Activated CD8-positive, alpha-beta memory T cell treated with anti-CD3 and anti-CD28 coated beads, Interleukin-2, amount 10 ng/mL, durations not matched to agents 7 days and 5 days (primary cell): ENCODE measurements at regions of chr17 and their contacts with region 1.

Region 1: GRCh38 chr17:49370971-49371834 is 9.2 kb upstream of the ZNF652 start:
- DNase-seq: no peak
- ATAC-seq: no peak
- H3K4me3 Mint-ChIP-seq: no peak overlapping the region
- H3K27ac Mint-ChIP-seq: no peak overlapping the region
- H3K4me1 Mint-ChIP-seq: peaks cover 8% of the 10 kb centered on the region
- H3K27me3 Mint-ChIP-seq: no peaks in the 10 kb centered on the region

Region 2: DNA sequence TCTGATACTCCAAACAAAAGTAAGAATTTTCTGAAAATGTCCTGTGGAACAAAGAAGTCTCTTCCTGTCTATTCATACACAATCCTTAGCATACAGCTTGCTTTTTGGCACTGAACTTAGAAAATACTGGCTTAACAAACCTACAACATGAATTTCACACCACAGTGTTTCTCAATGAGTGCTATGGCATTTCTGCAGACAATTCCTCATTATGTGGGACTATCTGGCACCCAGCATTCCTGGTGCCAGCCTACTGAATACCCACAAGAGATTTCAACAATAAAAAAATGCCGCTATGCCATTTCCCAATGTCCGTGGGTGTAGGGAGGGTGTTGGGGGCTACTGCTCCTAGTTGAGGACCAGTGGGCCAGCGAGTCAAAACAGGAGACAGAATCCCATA is 71.2 kb before region 1 on chr17:
- CTCF ChIA-PET with region 1: no interaction called
- DNase-seq: no peak
- ATAC-seq: no peak
- H3K4me3 Mint-ChIP-seq: no peak overlapping the region
- H3K27ac Mint-ChIP-seq: no peak overlapping the region
- H3K4me1 Mint-ChIP-seq: peaks cover 2% of the 10 kb centered on the region
- H3K27me3 Mint-ChIP-seq: no peaks in the 10 kb centered on the region

Region 3: DNA sequence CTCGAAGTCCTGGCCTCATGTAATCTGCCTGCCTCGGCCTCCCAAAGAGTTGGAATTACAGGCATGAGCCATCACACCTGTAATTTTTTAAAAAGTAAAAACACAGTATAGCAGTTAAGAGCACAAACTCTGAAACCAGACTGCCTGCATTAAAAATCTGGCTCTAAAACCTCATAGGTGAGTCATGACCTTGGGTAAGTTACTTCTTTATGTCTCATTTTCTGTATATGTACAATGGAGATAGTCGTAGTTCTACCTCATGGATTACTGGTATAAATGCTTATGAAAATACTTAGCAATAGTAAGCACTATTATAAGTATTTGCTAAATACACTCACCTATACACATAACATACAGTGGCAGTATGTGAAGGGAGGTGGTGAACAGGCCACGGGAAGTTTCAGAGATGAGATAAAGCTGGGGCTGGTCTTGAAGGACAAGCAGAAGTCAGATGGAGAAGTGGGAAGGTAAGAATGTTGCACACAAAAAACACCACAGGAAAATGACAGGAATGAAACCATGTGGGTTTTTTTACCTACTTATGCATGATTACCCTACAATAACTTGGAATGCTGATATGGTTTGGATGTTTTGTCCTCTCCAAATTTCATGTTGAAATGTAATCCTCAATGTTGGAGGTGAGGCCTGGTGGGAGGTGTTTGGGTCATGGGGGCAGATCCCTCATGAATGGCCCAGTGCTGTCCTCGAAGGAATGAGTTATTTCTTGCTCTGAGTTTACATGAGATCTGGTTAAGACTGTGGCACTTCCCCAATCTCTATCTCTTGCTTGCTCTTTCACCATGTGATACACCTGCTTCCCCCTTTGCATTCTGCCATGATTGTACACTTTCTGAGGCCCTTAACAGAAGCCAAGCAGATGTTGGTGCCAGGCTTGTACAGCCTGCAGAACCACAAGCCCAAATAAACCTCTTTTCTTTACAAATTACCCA is 43.1 kb before region 1 on chr17:
- CTCF ChIA-PET with region 1: interaction called, 14 read pairs
- DNase-seq: no peak
- ATAC-seq: no peak
- H3K4me3 Mint-ChIP-seq: no peak overlapping the region
- H3K27ac Mint-ChIP-seq: no peak overlapping the region
- H3K4me1 Mint-ChIP-seq: peaks cover 52% of the 10 kb centered on the region
- H3K27me3 Mint-ChIP-seq: no peaks in the 10 kb centered on the region

Region 4: GRCh38 chr17:49343273-49343672 is 27.9 kb before region 1 on chr17:
- CTCF ChIA-PET with region 1: interaction called, 26 read pairs
- DNase-seq: no peak
- ATAC-seq: peak; percentile 67
- H3K4me3 Mint-ChIP-seq: peak overlapping the region; percentile 64
- H3K27ac Mint-ChIP-seq: peak overlapping the region; percentile 98
- H3K4me1 Mint-ChIP-seq: peaks cover 74% of the 10 kb centered on the region
- H3K27me3 Mint-ChIP-seq: peaks cover 5% of the 10 kb centered on the region

Region 5: DNA sequence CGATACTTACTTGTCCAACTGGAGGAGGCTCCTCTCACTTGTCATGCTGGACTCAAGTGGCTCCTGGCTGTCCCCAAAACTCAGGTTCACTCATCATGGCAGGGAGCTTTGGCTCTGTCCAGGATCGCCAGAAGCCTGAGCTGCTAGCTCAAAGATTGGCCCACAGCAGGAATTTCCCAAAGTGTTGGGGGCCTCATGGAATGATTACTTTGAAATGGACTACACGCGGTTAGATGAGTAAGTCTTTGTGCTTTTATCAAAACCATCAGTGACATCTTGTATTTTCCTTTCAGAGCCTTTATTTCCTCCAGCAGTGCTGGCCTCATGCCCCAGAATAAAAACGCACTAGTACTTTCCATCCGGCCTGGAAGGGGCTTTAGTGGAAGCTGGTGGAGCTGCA is 72.7 kb after region 1 on chr17:
- CTCF ChIA-PET with region 1: no interaction called
- DNase-seq: no peak
- ATAC-seq: no peak
- H3K4me3 Mint-ChIP-seq: no peak overlapping the region
- H3K27ac Mint-ChIP-seq: no peak overlapping the region
- H3K4me1 Mint-ChIP-seq: peaks cover 2% of the 10 kb centered on the region
- H3K27me3 Mint-ChIP-seq: peaks cover 17% of the 10 kb centered on the region